Mammary epithelial cell (primary cell): ENCODE measurements at regions of chr9 and their contacts with region 1.

Region 1: GRCh38 chr9:127396808-127397497 is at the start of gene SLC2A8:
- DNase-seq: peak; percentile 100
- H3K4me3 ChIP-seq: peak within 1 kb of the TSS; percentile 52 to 79 (median 72)
- H3K27ac ChIP-seq: peak within 1 kb of the TSS; percentile 35
- H3K4me1 ChIP-seq: peaks cover 12% of the 10 kb centered on the region
- H3K27me3 ChIP-seq: no peaks in the 10 kb centered on the region
- CTCF ChIP-seq: peak; percentile 4 to 30
- total RNA-seq, gene SLC2A8: 8.0 to 17.1 TPM

Region 2: GRCh38 chr9:127174386-127175318 is 222.3 kb before region 1 on chr9:
- CTCF ChIA-PET with region 1: interaction called, 21 read pairs
- dilution Hi-C with region 1: no loop called
- in situ Hi-C with region 1: no loop called
- intact Hi-C with region 1: no loop called
- DNase-seq: no peak
- H3K4me3 ChIP-seq: no peak overlapping the region
- H3K27ac ChIP-seq: no peak overlapping the region
- H3K4me1 ChIP-seq: no peaks in the 10 kb centered on the region
- H3K27me3 ChIP-seq: peaks cover 5% of the 10 kb centered on the region
- CTCF ChIP-seq: no peak

Region 3: DNA sequence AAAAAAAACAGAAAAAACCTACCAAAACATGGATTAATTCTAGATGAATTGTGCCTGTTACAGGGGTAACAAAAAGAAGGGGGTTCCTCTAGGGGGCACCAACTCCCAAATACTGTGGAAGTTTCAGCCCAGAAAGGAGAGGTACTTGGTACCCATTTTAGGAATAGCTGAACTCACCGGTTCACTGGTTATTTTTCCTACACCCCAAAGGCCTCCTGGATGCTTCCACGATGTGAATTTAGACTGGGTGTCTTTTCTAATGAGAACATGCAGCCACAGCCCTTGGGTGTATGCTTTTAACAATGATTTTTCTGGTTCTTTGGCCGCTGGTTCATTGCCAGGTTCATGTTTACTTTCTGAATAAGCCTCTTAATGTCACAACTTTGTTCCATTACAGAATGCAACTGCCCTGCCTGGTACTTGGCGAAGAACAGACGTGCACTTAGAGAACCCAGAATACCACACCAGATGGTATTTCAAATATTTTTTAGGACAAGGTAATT is 85.7 kb before region 1 on chr9:
- CTCF ChIA-PET with region 1: no interaction called
- dilution Hi-C with region 1: loop called (anchors 10 kb)
- in situ Hi-C with region 1: no loop called
- intact Hi-C with region 1: no loop called
- DNase-seq: peak; percentile 41
- H3K4me3 ChIP-seq: no peak overlapping the region
- H3K27ac ChIP-seq: no peak overlapping the region
- H3K4me1 ChIP-seq: no peaks in the 10 kb centered on the region
- H3K27me3 ChIP-seq: no peaks in the 10 kb centered on the region
- CTCF ChIP-seq: peak; percentile 31 to 51

Region 4: GRCh38 chr9:127418037-127418471 is 21.1 kb after region 1 on chr9:
- CTCF ChIA-PET with region 1: no interaction called
- dilution Hi-C with region 1: no loop called
- in situ Hi-C with region 1: no loop called
- intact Hi-C with region 1: loop called (anchors 2 kb)
- DNase-seq: no peak
- H3K4me3 ChIP-seq: no peak overlapping the region
- H3K27ac ChIP-seq: no peak overlapping the region
- H3K4me1 ChIP-seq: peaks cover 21% of the 10 kb centered on the region
- H3K27me3 ChIP-seq: no peaks in the 10 kb centered on the region
- CTCF ChIP-seq: peak in 1 of 2 donors; percentile 19